ENCODE measurements at regions of chr6 and their contacts with region 1.

Region 1: DNA sequence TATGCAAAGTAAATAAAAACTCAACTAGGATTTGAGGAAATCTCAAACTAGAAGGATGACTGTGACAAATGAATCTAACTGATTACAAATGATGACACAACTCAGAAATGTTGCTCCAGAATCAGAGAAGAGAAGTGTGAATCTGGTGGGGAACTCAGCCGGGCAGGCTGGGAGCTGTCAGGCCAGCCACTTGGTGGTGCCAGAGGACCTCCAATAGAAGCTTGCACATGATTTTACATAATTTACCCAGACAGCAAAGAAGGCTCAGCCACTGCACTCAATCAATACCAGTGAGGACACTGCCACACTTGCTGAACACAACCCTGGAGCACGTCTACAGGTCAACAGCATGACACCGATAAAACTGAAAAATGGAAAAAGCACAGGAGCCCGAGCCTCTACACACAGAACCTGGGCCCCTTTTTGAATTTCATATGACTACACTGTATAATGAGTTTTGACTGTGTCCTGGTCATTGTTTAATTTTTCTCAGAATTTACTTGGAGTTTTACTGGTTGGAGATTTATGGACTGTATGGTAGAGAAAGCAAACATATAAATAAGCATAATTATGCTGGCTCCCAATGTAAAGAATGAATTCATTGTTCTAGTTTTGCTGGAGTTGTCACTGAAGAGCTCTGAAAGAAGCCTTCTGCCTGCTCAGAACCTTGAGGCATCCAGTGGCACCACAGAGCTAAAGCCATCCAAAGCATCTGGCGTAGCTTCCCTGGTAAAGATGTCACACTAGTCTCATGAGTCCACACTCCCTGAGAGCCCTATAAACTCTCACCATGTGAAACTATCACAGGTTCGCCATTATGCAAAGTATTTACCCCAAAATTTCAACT is 296.5 kb downstream of the THBS2 start:
- DNase-seq: peak; percentile 74
- ATAC-seq: peak; percentile 92

Region 2: DNA sequence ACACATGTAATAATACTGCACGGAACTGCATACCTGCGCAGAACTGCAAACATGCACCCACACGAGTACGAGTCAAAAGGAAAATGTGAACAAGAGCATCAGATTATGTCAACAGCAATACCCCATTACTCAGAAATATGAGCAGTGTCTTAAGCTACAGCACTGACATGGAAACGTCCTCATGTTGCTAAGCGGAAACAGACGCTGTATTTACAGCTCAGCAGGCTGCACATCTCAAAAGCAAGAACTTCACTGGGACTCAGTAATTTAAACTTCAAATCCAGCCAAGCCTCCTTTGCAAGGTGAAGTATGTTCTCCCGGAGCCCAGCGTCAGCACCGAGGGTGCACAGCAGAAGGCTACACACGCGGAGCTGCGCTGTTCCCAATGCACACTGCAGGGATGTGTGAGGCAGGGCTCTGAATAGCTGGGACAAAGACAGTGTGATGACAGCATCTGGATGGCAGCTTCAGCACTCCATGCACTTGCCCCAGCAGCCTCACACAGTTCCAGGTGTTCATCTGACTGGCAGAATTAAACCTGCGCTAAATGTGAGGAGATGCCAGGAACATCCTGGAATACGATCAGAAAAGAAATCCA is 541.9 kb after region 1 on chr6:
- intact Hi-C with region 1: no loop called
- DNase-seq: no peak
- ATAC-seq: no peak

Region 3: GRCh38 chr6:169513478-169514193 is 556.5 kb after region 1 on chr6:
- intact Hi-C with region 1: loop called (anchors 10 kb)
- DNase-seq: no peak
- ATAC-seq: no peak